Activated CD8-positive, alpha-beta T cell treated with anti-CD3 and anti-CD28 coated beads, Interleukin-2, amount 10 ng/mL, durations not matched to agents 7 days and 5 days (primary cell): ENCODE measurements at regions of chr1 and their contacts with region 1.

Region 1: DNA sequence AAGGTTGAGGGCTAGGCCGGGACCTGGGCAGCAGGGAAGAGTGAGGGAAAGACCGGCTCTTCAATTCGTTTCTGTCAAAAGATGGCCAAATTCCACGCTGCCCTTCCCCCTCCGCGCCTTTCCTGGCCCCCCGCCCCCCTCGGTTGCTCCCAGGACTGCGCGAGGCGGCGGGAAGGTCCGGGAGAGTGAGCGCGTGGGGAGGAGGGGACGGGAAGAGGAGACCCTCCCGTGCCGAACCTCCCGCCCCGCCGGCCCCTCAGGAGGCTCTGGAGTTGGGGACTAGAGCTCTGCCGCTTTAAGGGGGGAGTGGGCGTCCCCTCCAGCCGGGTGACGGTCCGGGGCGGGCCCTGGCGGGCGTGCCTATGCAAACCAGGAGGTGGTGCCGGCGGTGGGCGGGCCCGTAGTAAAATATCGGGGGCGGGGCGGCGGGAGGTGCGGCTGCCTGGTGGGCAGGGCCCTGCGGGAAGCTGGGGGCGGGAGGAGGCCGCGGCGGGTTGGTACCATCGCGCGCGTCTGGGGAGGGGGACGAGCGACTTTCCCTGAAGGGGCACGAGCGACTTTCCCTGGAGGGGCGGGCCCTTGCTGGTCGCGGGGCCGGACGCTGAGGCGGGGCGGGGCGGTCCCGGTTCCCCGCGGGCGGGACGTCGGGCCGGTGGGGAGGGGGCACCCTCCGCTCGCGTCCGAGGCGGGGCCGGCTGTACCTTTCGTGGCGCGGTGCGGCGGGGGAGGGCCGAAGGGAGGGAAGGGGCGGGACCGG is 58.2 kb downstream of the BCL9 start:
- DNase-seq: peak; percentile 96
- ATAC-seq: peak; percentile 89
- H3K4me3 Mint-ChIP-seq: peak overlapping the region; percentile 85
- H3K27ac Mint-ChIP-seq: peak overlapping the region; percentile 92
- H3K4me1 Mint-ChIP-seq: peaks cover 25% of the 10 kb centered on the region
- H3K27me3 Mint-ChIP-seq: peaks cover 7% of the 10 kb centered on the region

Region 2: GRCh38 chr1:147545133-147545532 is 54.4 kb before region 1 on chr1:
- CTCF ChIA-PET with region 1: interaction called, 5 read pairs
- POLR2A ChIA-PET with region 1: interaction called, 28 read pairs
- DNase-seq: peak; percentile 90
- ATAC-seq: peak; percentile 69
- H3K4me3 Mint-ChIP-seq: peak overlapping the region; percentile 36
- H3K27ac Mint-ChIP-seq: peak overlapping the region; percentile 73
- H3K4me1 Mint-ChIP-seq: peaks cover 70% of the 10 kb centered on the region
- H3K27me3 Mint-ChIP-seq: no peaks in the 10 kb centered on the region